Activated CD4-positive, alpha-beta T cell treated with anti-CD3 and anti-CD28 coated beads, Interleukin-2, amount 10 ng/mL, durations not matched to agents 24 days and 14 days (primary cell): ENCODE measurements at regions of chr2 and their contacts with region 1.

Region 1: GRCh38 chr2:42795841-42796301 is 3.5 kb upstream of the HAAO start:
- DNase-seq: no peak
- H3K4me3 Mint-ChIP-seq: no peak overlapping the region
- H3K27ac Mint-ChIP-seq: no peak overlapping the region
- H3K4me1 Mint-ChIP-seq: peaks cover 29% of the 10 kb centered on the region
- H3K27me3 Mint-ChIP-seq: peaks cover 39% of the 10 kb centered on the region

Region 2: GRCh38 chr2:42722320-42723190 is 73.3 kb before region 1 on chr2:
- intact Hi-C with region 1: loop called (anchors 2 kb)
- DNase-seq: peak; percentile 78
- H3K4me3 Mint-ChIP-seq: peak overlapping the region; percentile 11
- H3K27ac Mint-ChIP-seq: peak overlapping the region; percentile 70
- H3K4me1 Mint-ChIP-seq: peaks cover 11% of the 10 kb centered on the region
- H3K27me3 Mint-ChIP-seq: no peaks in the 10 kb centered on the region

Region 3: GRCh38 chr2:43269074-43269572 is 473.3 kb after region 1 on chr2:
- intact Hi-C with region 1: no loop called
- DNase-seq: no peak
- H3K4me3 Mint-ChIP-seq: no peak overlapping the region
- H3K27ac Mint-ChIP-seq: peak overlapping the region; percentile 30
- H3K4me1 Mint-ChIP-seq: peaks cover 19% of the 10 kb centered on the region
- H3K27me3 Mint-ChIP-seq: no peaks in the 10 kb centered on the region